ENCODE measurements at regions of chr2 and their contacts with region 1.

Region 1: DNA sequence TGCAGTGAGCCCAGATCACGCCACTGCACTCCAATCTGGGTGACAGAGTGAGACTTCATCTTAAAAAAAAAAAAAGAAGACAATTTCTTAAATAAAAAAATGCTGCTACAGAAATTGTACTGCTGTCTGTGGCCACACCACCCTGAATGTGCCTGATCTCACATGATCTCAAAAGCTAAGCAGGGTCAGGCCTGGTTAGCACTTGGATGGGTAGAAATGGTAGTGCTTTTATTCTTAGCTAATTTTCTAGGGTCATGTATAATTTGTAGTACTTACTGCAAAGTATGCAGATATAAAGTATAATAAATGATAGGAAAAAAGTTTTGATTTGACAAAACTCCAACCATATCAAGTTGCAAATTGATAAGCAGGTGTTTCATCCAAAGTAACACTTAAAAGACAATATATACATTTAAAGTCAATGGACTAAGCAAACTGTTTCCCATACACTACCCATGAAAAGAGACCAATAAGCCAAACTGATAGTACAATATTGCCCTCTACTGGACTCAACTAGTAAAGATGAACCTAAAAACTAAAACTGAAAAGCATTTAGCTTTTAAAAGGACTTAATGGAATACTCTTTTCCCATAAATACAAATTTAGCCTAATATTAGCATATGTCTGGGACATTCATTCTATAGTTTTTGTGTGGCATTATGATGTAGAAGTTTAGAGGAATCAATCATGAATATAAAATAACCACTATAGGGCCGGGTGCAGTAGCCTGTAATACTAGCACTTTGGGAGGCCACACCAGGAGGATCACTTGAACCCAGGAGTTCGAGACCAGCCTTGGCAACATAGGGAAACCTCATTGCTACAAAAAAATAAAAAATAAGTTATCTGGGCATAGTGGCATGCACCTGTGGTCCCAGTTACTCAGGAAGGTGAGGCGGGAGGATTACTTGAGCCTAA is 18.6 kb upstream of the PEX13 start:
- DNase-seq: peak; percentile 37
- H3K4me3 ChIP-seq: no peak overlapping the region
- H3K27ac ChIP-seq: no peak overlapping the region
- H3K4me1 ChIP-seq: no peaks in the 10 kb centered on the region
- H3K27me3 ChIP-seq: no peaks in the 10 kb centered on the region
- CTCF ChIP-seq: peak; percentile 59 to 62

Region 2: GRCh38 chr2:60707750-60708371 is 291.0 kb before region 1 on chr2:
- CTCF ChIA-PET with region 1: no interaction called
- dilution Hi-C with region 1: no loop called
- in situ Hi-C with region 1: no loop called
- intact Hi-C with region 1: loop called (anchors 1 kb)
- DNase-seq: peak; percentile 24
- H3K4me3 ChIP-seq: no peak overlapping the region
- H3K27ac ChIP-seq: no peak overlapping the region
- H3K4me1 ChIP-seq: peaks cover 12% of the 10 kb centered on the region
- H3K27me3 ChIP-seq: no peaks in the 10 kb centered on the region
- CTCF ChIP-seq: peak; percentile 57 to 70

Region 3: GRCh38 chr2:60806988-60807681 is 191.8 kb before region 1 on chr2:
- CTCF ChIA-PET with region 1: no interaction called
- dilution Hi-C with region 1: no loop called
- in situ Hi-C with region 1: loop called in 1 of 2 experiments (anchors 10 kb)
- intact Hi-C with region 1: no loop called
- DNase-seq: peak; percentile 16
- H3K4me3 ChIP-seq: no peak overlapping the region
- H3K27ac ChIP-seq: no peak overlapping the region
- H3K4me1 ChIP-seq: no peaks in the 10 kb centered on the region
- H3K27me3 ChIP-seq: no peaks in the 10 kb centered on the region
- CTCF ChIP-seq: no peak

Region 4: GRCh38 chr2:60881047-60881932 is 117.6 kb before region 1 on chr2 and contains the start of gene REL:
- CTCF ChIA-PET with region 1: no interaction called
- dilution Hi-C with region 1: no loop called
- in situ Hi-C with region 1: no loop called
- intact Hi-C with region 1: loop called (anchors 2 kb)
- DNase-seq: peak; percentile 91
- H3K4me3 ChIP-seq: peak within 1 kb of the TSS; percentile 71 to 98 (median 85)
- H3K27ac ChIP-seq: peak within 1 kb of the TSS; percentile 100
- H3K4me1 ChIP-seq: peaks cover 11% of the 10 kb centered on the region
- H3K27me3 ChIP-seq: no peaks in the 10 kb centered on the region
- CTCF ChIP-seq: peak in 1 of 2 donors; percentile 12
- total RNA-seq, gene REL: 14.5 to 15.0 TPM

Region 5: GRCh38 chr2:61044636-61045035 is 45.7 kb after region 1 on chr2:
- CTCF ChIA-PET with region 1: no interaction called
- dilution Hi-C with region 1: loop called (anchors 5 kb)
- in situ Hi-C with region 1: no loop called
- intact Hi-C with region 1: no loop called
- DNase-seq: no peak
- H3K4me3 ChIP-seq: no peak overlapping the region
- H3K27ac ChIP-seq: no peak overlapping the region
- H3K4me1 ChIP-seq: no peaks in the 10 kb centered on the region
- H3K27me3 ChIP-seq: no peaks in the 10 kb centered on the region
- CTCF ChIP-seq: no peak

Measured in mammary epithelial cell (primary cell).